GM13977 (cell line): ENCODE measurements at regions of chr22 and their contacts with region 1.

Region 1: DNA sequence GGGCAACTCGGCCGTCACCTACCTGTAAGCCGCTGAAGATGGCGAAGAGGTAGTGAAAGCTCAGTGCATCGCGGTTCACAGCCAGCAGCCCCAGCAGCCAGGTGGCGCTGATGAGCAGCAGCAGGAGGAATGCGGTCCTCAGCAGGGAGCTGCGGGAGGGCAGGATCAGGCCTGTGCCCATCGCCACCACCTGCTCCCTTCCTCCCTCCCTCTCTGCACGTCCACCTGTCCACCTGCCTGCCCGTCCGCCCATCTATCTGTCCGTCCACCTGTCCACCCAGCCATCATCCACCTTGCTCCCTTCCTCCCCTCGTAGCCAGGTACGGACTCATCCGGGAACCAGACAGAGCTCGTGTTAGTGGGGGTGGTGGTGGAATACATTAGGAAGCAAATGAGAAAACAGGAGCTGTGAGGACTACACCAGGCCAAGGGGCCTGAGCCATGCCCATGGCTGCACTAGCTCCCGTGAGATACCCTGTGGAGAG is 32.2 kb downstream of the TRMU start:
- DNase-seq: peak; percentile 92
- CTCF ChIP-seq: peak; percentile 99

Region 2: DNA sequence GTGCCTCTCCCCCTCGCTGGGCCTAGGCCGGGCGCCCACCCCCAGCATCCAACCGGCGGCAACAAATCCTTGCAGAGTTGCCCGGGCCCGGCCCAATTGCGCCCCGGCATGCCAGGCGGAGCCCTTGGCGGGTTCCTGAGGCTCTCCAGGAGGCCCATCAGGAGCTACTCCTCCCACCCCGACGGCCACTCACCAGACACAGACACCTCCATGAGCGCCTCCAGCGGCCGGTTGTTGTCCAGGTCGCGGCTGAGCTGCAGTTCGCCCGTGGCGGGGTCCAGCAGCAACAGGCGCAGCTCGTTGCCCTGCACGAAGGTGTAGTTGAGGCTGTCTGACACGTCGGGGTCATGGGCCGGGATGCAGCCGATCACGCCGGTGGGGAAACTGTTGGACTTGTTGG is 165.7 kb after region 1 on chr22:
- in situ Hi-C with region 1: loop called (anchors 5 kb)
- DNase-seq: no peak
- CTCF ChIP-seq: no peak

Region 3: GRCh38 chr22:46774253-46774979 is 406.7 kb after region 1 on chr22:
- in situ Hi-C with region 1: no loop called
- DNase-seq: no peak
- CTCF ChIP-seq: no peak